A673 (cell line): ENCODE measurements at regions of chr1 and their contacts with region 1.

Region 1: DNA sequence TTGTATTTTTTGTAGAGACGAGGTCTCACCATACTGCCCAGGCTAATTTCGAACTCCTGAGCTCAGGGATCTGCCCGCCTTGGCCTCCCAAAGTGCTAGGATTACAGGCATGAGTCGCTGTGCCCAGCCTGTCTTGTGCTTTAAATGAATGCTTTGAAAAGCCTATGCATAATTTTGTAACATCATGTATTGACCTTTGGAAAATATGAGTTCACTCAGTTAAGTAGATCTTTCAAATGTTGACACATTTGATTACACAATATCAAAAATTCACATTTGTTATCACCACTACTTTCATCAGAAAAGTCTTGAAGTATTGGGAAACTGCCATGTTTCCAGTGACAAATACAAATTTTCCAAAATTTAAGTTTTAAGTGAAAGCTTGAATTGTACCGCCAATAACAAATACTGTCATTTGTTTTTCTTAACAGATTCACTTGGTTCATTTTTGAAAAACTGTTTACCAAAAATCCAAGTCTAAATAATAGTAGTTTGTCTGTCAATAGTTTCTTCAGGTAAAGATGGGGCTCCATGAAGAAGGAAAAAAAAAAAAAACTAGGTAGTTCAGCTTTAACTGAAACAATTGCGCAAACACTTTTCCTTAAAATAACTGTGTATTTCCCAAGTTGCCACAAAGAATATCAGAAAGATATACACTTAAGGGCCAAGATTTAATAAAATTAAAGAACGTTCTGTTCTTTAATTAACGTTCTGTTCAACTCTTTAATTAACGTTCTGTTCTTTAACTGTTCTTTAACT is 233.2 kb upstream of the NR5A2 start:
- DNase-seq: no peak
- H3K4me3 ChIP-seq: no peak overlapping the region
- H3K27ac ChIP-seq: no peak overlapping the region
- H3K4me1 ChIP-seq: no peaks in the 10 kb centered on the region
- H3K27me3 ChIP-seq: peaks cover 19% of the 10 kb centered on the region
- CTCF ChIP-seq: no peak

Region 2: GRCh38 chr1:199929556-199929955 is 135.3 kb after region 1 on chr1:
- CTCF ChIA-PET with region 1: no interaction called
- POLR2A ChIA-PET with region 1: no interaction called
- intact Hi-C with region 1: loop called (anchors 10 kb)
- DNase-seq: no peak
- H3K4me3 ChIP-seq: no peak overlapping the region
- H3K27ac ChIP-seq: no peak overlapping the region
- H3K4me1 ChIP-seq: no peaks in the 10 kb centered on the region
- H3K27me3 ChIP-seq: no peaks in the 10 kb centered on the region
- CTCF ChIP-seq: no peak